PC-9 (cell line): ENCODE measurements at regions of chr3 and their contacts with region 1.

Region 1: GRCh38 chr3:47571391-47572175 is 7.1 kb downstream of the CSPG5 start:
- DNase-seq: no peak
- H3K4me3 ChIP-seq: no peak overlapping the region
- H3K27ac ChIP-seq: no peak overlapping the region
- H3K4me1 ChIP-seq: no peaks in the 10 kb centered on the region
- H3K27me3 ChIP-seq: peaks cover 10% of the 10 kb centered on the region
- CTCF ChIP-seq: no peak

Region 2: GRCh38 chr3:47083786-47084185 is 487.8 kb before region 1 on chr3:
- CTCF ChIA-PET with region 1: no interaction called
- POLR2A ChIA-PET with region 1: interaction called, 10 read pairs
- intact Hi-C with region 1: no loop called
- DNase-seq: no peak
- H3K4me3 ChIP-seq: no peak overlapping the region
- H3K27ac ChIP-seq: no peak overlapping the region
- H3K4me1 ChIP-seq: no peaks in the 10 kb centered on the region
- H3K27me3 ChIP-seq: no peaks in the 10 kb centered on the region
- CTCF ChIP-seq: no peak